ENCODE measurements at regions of chr10 and their contacts with region 1.

Region 1: DNA sequence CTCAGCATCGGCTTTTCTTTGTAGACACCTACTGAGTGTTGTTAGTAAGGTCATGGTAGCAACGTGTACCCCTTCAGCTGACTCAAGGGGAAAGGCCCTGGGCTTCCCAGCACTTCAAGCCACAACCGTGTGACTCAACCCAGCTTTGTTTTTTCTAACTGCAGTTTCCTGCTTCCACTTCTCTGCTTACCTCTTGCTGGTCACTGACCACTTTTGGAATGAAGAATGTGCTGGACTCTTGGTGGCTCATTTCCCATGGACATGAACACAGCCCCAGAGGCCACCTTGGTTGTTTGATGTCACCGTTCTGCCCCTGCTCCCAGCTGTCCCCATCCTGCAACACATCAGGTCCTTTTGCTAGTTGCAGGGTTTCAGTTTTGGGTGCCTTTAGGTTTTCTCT is 69.5 kb upstream of the ZNF438 start:
- DNase-seq: peak; percentile 72
- H3K4me3 Mint-ChIP-seq: peak overlapping the region; percentile 51
- H3K27ac Mint-ChIP-seq: peak overlapping the region; percentile 94
- H3K4me1 Mint-ChIP-seq: peaks cover 81% of the 10 kb centered on the region
- H3K27me3 Mint-ChIP-seq: no peaks in the 10 kb centered on the region

Region 2: DNA sequence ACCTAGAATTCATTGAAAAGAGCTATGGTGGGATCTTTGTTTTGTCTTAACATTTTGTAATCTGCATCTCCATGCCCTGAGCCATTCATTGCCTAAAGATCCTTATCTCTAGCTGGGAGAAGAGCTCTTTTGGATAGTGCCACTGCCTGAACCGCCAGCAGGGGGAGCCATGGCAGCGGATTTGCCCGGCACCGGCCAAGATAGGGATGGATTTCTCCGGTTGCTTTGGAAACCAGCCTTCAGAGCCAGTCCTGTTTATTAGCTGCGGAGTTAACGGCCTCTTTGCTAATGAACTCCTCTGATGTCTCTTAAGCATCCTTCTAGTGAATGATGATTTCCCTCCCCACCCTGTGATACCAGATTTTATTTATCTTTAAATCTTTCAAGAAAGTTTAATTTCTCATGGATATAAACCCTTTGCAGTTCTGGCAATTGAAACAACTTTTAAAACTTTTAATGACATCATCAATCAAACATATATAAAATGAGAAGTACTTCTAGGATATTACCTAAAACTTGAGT is 413.4 kb before region 1 on chr10:
- intact Hi-C with region 1: loop called (anchors 1 kb)
- DNase-seq: peak; percentile 63
- H3K4me3 Mint-ChIP-seq: no peak overlapping the region
- H3K27ac Mint-ChIP-seq: no peak overlapping the region
- H3K4me1 Mint-ChIP-seq: peaks cover 44% of the 10 kb centered on the region
- H3K27me3 Mint-ChIP-seq: peaks cover 5% of the 10 kb centered on the region

Region 3: DNA sequence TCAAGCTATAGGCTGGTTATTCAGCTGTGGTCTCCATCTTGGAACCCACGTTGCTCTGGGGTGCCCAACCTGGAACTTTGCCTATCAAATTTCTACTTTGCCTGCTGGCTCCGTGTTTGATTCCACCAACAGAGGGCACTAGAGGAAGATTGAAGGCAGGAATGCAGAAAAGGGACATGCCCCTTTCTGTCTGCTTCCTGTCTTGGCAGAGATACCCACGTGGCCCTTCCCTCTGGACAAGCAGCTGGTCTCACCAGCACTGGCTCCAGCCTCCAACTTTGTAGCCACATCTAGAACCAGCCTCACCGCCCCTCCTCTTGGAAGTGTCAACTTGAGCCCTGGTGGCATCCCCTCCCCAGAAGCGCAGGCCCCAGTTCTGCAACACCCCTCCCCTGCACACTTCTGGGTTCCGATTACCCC is 17.3 kb before region 1 on chr10:
- intact Hi-C with region 1: loop called (anchors 2 kb)
- DNase-seq: peak; percentile 58
- H3K4me3 Mint-ChIP-seq: no peak overlapping the region
- H3K27ac Mint-ChIP-seq: peak overlapping the region; percentile 11
- H3K4me1 Mint-ChIP-seq: peaks cover 24% of the 10 kb centered on the region
- H3K27me3 Mint-ChIP-seq: peaks cover 4% of the 10 kb centered on the region

Region 4: DNA sequence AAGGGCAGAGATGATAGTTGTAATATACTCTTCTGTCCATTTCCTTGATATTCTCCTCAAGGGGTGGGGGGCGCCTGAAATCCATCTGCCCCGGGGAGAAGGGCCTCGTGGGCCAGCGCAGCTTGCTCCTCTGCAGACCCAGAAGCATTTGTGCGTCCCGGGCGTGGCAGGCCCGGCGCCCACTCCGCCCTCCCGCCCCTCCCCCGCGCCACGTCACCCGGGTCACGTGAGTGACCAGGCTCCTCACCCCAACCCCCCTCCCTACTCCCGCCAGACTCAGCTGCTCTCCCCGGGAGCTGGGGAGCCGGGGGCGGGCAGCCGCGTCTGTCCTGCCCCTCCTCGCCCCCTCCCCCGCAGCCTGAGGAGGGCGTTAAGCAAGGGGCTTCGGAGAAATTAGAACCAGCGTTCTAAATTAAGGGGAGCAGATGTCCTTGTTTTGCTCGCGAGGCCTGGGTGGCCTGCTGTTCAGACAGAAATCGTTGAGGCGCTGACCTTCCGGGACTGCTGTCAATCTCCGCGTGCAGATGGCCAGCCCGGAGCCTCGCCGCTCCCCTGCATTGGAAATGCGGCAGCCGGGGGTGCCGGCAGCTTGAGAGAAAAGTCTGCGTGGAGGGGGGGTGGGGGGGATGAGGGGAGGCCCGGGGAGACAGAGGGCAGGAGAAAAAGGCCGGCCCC is 32.6 kb after region 1 on chr10:
- intact Hi-C with region 1: loop called (anchors 1 kb)
- DNase-seq: peak; percentile 40
- H3K4me3 Mint-ChIP-seq: peak overlapping the region; percentile 61
- H3K27ac Mint-ChIP-seq: peak overlapping the region; percentile 80
- H3K4me1 Mint-ChIP-seq: peaks cover 70% of the 10 kb centered on the region
- H3K27me3 Mint-ChIP-seq: no peaks in the 10 kb centered on the region

Region 5: DNA sequence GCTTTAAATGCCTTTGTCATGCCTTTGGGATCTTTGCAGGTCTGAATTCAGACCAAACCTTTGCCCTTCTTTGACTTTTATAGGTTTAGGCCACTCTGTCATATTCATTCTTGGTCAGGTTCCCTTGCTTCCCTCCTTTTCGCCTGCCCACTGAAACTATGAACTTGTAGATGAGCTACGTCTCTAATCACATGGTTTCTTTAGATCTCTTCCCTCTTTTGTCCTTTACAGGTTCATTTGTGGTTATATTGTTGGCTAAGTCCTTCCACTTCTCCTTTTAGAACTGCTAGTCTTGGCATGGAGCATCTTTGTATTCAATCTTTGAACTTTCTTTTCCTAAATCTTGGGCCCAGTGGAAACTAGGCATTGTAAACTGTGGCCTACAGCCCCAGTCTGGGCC is 113.9 kb after region 1 on chr10:
- intact Hi-C with region 1: no loop called
- DNase-seq: no peak
- H3K4me3 Mint-ChIP-seq: no peak overlapping the region
- H3K27ac Mint-ChIP-seq: no peak overlapping the region
- H3K4me1 Mint-ChIP-seq: no peaks in the 10 kb centered on the region
- H3K27me3 Mint-ChIP-seq: peaks cover 2% of the 10 kb centered on the region

Region 6: DNA sequence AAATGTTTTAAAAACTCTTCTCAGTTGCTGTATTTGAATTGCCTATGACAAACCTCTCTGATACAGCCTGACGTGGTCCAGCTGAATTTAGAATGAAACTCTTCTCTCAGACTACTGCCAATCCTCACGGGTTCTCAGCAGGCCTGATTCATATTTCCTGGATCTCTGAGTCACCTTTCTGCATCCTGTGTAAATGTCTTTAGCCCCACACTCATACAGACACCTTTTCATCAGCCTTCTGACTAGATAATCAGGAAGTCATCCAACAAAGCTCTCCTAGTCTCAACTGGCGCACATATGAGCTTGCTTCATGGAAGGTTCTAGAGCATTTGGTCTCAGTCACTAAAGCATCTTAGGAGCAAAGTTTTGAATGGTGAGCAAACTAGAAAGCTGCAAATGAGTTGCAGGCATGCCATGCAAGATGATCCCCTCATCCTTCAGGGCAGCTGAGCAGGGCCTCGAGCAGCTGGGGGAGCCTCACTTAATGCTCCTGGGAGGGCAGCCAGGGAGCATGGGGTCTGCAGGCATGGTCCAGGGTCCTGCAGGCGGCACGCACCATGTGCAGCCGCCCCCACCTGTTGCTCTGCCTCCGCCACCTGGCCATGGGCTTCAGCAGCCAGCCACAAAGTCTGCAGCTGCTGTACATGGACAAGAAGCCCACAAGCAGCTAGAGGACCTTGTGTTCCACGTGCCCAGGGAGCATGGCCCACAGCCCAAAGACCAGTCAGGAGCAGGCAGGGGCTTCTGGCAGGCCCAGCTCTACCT is 644.7 kb after region 1 on chr10:
- intact Hi-C with region 1: loop called (anchors 2 kb)
- DNase-seq: peak; percentile 49
- H3K4me3 Mint-ChIP-seq: peak overlapping the region; percentile 2
- H3K27ac Mint-ChIP-seq: peak overlapping the region; percentile 82
- H3K4me1 Mint-ChIP-seq: peaks cover 27% of the 10 kb centered on the region
- H3K27me3 Mint-ChIP-seq: no peaks in the 10 kb centered on the region

Region 7: GRCh38 chr10:32077896-32078485 is 976.9 kb after region 1 on chr10:
- intact Hi-C with region 1: no loop called
- DNase-seq: no peak
- H3K4me3 Mint-ChIP-seq: no peak overlapping the region
- H3K27ac Mint-ChIP-seq: no peak overlapping the region
- H3K4me1 Mint-ChIP-seq: no peaks in the 10 kb centered on the region
- H3K27me3 Mint-ChIP-seq: peaks cover 8% of the 10 kb centered on the region